ENCODE measurements at regions of chr19 and their contacts with region 1.

Region 1: DNA sequence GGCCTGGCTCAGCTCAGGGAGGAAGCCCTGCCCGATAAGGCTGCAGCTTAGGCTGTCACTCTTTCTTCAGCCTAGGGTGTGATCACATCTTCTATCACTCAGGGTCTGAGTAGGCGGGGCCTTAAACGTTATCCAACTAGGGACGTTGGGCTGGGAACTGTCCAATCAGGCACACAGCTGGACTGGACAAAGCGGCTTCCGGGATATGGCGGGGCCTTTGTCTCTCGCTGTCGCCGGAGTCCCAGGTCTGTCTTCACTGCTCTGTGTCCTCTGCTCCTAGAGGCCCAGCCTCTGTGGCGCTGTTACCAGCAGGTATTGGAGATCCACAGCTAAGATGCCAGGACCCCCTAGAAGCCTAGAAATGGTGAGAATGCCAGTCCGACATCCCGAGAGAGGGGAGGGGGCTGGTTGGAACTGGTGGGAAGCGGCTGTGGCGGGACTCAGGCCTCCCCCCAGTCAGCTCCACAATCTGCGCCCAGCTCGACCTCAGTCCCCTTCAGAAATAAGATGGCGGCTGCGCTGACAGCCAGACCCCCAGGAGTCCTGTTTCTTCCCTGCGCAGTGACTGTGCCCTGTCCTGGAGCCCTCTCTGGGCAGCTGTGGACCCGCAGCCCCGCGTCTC is at the start of gene ZNF254:
- DNase-seq: peak; percentile 82
- H3K4me3 Mint-ChIP-seq: peak within 1 kb of the TSS; percentile 96
- H3K27ac Mint-ChIP-seq: peak within 1 kb of the TSS; percentile 97
- H3K4me1 Mint-ChIP-seq: peaks cover 3% of the 10 kb centered on the region
- H3K27me3 Mint-ChIP-seq: no peaks in the 10 kb centered on the region
- total RNA-seq, gene ZNF254: 8.7 and 11.5 TPM in 2 replicates

Region 2: DNA sequence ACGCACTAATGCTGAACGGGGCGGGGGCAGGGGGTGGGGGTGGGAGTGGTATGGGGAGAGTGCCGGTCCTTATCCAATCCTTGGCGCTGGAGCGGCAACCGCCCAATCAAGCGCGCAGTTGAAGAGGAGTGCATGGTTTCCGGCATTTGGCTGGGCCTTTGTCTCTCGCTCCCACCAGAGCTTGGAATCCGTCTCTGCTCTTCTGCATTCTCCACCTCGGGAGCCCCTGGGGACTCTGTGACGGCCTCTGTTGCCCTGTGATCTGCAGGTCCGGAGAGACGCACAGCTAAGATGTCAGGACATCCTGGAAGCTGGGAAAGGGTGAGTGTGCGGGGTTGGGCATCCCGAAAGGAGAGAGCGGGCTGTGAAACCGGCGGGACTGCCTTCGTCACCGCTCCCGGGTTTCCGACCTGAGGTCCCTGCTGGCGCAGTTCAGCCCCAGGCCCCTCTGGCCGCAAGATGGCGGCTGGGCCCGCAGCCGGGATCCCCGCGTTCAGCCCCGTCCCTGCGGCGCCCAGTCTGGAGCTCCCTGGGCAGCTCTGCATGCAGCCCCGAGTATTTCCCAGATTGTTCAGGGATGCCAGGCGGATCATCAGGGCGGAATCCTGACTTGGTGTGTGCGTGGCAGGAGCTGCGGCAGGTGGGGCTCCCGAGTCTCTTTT is 53.7 kb before region 1 on chr19:
- intact Hi-C with region 1: loop called (anchors 1 kb)
- DNase-seq: peak; percentile 79
- H3K4me3 Mint-ChIP-seq: peak overlapping the region; percentile 100
- H3K27ac Mint-ChIP-seq: peak overlapping the region; percentile 98
- H3K4me1 Mint-ChIP-seq: peaks cover 20% of the 10 kb centered on the region
- H3K27me3 Mint-ChIP-seq: no peaks in the 10 kb centered on the region

Measured in activated T-helper 2 cell treated with anti-CD3 and anti-CD28 coated beads, Interferon-gamma antibody, Interleukin-2, Interleukin-4, amounts not matched to agents 10 μg/mL and 5 μg/mL and 100 μg/mL, durations not matched to agents 14 hours and 24 hours and 36 hours (primary cell).